K562 (cell line): ENCODE measurements at regions of chr12 and their contacts with region 1.

Region 1: DNA sequence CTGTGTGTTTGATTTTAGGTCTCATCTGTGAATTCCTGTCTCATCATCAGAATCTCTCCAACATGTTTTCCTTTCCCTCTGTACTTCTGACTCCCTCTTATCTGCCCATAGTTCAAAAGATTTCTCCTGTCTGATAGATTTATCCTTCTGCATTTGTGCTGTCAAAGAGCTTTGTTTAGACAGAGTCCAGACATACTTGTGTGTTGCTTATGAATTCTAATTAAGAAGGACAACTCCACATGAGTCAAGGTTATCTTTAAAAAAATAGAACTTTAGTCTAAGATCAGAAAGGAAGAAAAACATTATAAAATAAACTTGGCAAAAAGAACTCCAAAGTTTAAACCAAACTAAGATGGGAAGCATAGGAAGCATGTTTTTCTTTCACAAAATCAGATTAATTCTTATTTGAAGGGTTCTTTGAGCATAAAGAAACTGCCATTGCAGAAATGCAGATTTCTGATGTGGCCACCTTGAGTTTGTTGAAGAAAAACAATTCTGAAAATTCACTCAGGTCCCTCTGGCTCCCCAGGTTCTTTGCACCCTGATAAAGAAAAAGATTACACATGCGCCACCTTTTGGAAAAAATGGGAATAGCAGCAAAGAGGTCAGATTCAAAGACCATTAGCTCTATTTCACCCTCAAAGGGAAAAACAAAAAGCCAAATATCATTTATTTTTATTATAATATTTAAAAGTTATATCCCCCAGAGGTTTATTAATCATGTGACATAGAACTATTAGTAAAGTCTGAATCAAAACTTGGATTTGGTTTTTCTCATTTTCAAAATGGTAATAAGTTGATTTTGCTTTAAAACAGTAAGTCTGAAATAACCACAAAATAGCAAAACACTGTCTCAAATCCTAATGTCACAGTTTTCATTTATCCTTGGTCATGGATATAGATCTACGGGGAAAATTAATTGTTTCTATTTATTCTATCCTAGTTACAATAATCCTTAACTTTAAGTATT is 143.7 kb upstream of the DCN start:
- DNase-seq: peak; percentile 37 to 65 (median 43)
- ATAC-seq: peak; percentile 74
- H3K4me3 ChIP-seq: no peak overlapping the region
- H3K27ac ChIP-seq: no peak overlapping the region
- H3K4me1 ChIP-seq: no peaks in the 10 kb centered on the region
- H3K27me3 ChIP-seq: no peaks in the 10 kb centered on the region
- CTCF ChIP-seq: peak; percentile 50 to 79 (median 63); a peak in 5 of 6 replicates
- EP300 ChIP-seq: no peak
- POLR2A ChIP-seq: no peak
- RAD21 ChIP-seq: peak; percentile 42 to 50

Region 2: GRCh38 chr12:89800435-89800834 is 1525.9 kb before region 1 on chr12:
- CTCF ChIA-PET with region 1: no interaction called
- POLR2A ChIA-PET with region 1: no interaction called
- in situ Hi-C with region 1: no loop called
- intact Hi-C with region 1: no loop called
- DNase-seq: peak; percentile 59 to 80 (median 72)
- ATAC-seq: peak; percentile 93
- H3K4me3 ChIP-seq: no peak overlapping the region
- H3K27ac ChIP-seq: no peak overlapping the region
- H3K4me1 ChIP-seq: peaks cover 6 to 29% of the 10 kb centered on the region in 2 experiments; a peak in 3 of 5 replicates
- H3K27me3 ChIP-seq: no peaks in the 10 kb centered on the region
- CTCF ChIP-seq: no peak
- EP300 ChIP-seq: peak; percentile 51; the same call in 1 of the 2 replicates
- POLR2A ChIP-seq: no peak
- RAD21 ChIP-seq: no peak

Region 3: DNA sequence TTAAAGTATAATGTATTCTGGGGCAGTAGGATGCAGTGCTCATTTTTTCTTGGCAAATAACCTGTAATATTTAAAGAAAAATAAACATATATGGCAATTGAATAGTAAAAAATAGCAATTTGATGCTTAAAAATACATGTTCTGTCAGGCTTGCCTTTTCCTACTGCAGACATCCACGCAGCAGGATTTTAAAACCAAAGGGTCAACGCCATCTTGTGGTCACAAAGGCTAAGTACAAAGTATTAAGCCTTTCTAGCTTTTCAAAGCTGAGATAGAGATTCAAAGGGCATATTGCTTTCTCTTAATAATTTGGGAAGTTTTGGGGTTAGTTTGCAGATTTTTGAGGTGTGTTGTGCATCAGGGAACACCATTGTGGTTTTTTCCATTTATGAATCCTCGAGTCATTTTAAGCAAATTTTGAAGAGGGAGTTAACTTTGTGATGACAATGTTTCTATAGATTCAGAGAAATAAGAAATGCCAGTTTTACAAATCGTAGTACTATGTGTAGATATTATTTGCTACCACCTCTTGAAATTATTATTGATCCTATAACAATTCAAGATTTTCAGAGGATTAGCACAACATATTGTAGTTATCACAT is 366.7 kb before region 1 on chr12:
- CTCF ChIA-PET with region 1: no interaction called
- POLR2A ChIA-PET with region 1: no interaction called
- in situ Hi-C with region 1: no loop called
- intact Hi-C with region 1: loop called (anchors 5 kb)
- DNase-seq: peak; percentile 13 to 50 (median 28)
- ATAC-seq: peak; percentile 82
- H3K4me3 ChIP-seq: no peak overlapping the region
- H3K27ac ChIP-seq: no peak overlapping the region
- H3K4me1 ChIP-seq: peaks cover 0 to 3% of the 10 kb centered on the region in 2 experiments; a peak in 1 of 5 replicates
- H3K27me3 ChIP-seq: no peaks in the 10 kb centered on the region
- CTCF ChIP-seq: peak; percentile 62 to 67 (median 66)
- EP300 ChIP-seq: no peak
- POLR2A ChIP-seq: no peak
- RAD21 ChIP-seq: peak; percentile 43 to 66; a peak in 3 of 4 replicates

Region 4: GRCh38 chr12:90978117-90978770 is 348.1 kb before region 1 on chr12:
- CTCF ChIA-PET with region 1: no interaction called
- POLR2A ChIA-PET with region 1: no interaction called
- in situ Hi-C with region 1: loop called (anchors 25 kb)
- intact Hi-C with region 1: loop called (anchors 5 kb)
- DNase-seq: peak in 3 of 4 experiments; percentile 9 to 25 (median 14)
- ATAC-seq: peak; percentile 76
- H3K4me3 ChIP-seq: no peak overlapping the region
- H3K27ac ChIP-seq: no peak overlapping the region
- H3K4me1 ChIP-seq: no peaks in the 10 kb centered on the region
- H3K27me3 ChIP-seq: no peaks in the 10 kb centered on the region
- CTCF ChIP-seq: peak; percentile 40 to 60 (median 45); a peak in 4 of 6 replicates
- EP300 ChIP-seq: no peak
- POLR2A ChIP-seq: no peak
- RAD21 ChIP-seq: peak; percentile 45 to 67

Region 5: GRCh38 chr12:91109148-91109564 is 217.2 kb before region 1 on chr12:
- CTCF ChIA-PET with region 1: no interaction called
- POLR2A ChIA-PET with region 1: no interaction called
- in situ Hi-C with region 1: no loop called
- intact Hi-C with region 1: loop called (anchors 10 kb)
- DNase-seq: peak; percentile 7 to 59 (median 27)
- ATAC-seq: peak; percentile 85
- H3K4me3 ChIP-seq: no peak overlapping the region
- H3K27ac ChIP-seq: no peak overlapping the region
- H3K4me1 ChIP-seq: no peaks in the 10 kb centered on the region
- H3K27me3 ChIP-seq: no peaks in the 10 kb centered on the region
- CTCF ChIP-seq: peak; percentile 37 to 65 (median 51)
- EP300 ChIP-seq: no peak
- POLR2A ChIP-seq: no peak
- RAD21 ChIP-seq: peak; percentile 17 to 55; a peak in 2 of 4 replicates

Region 6: GRCh38 chr12:91178139-91178561 is 148.2 kb before region 1 on chr12:
- CTCF ChIA-PET with region 1: interaction called, 4 read pairs
- POLR2A ChIA-PET with region 1: no interaction called
- in situ Hi-C with region 1: no loop called
- intact Hi-C with region 1: loop called (anchors 2 kb)
- DNase-seq: peak in 1 of 4 experiments; percentile 1
- ATAC-seq: peak; percentile 69
- H3K4me3 ChIP-seq: no peak overlapping the region
- H3K27ac ChIP-seq: no peak overlapping the region
- H3K4me1 ChIP-seq: no peaks in the 10 kb centered on the region
- H3K27me3 ChIP-seq: no peaks in the 10 kb centered on the region
- CTCF ChIP-seq: peak; percentile 11 to 51 (median 30); a peak in 4 of 6 replicates
- EP300 ChIP-seq: no peak
- POLR2A ChIP-seq: no peak
- RAD21 ChIP-seq: peak; percentile 38 to 63; a peak in 3 of 4 replicates

Region 7: GRCh38 chr12:91561958-91562875 is 235.9 kb after region 1 on chr12:
- CTCF ChIA-PET with region 1: no interaction called
- POLR2A ChIA-PET with region 1: no interaction called
- in situ Hi-C with region 1: no loop called
- intact Hi-C with region 1: no loop called
- DNase-seq: no peak
- ATAC-seq: no peak
- H3K4me3 ChIP-seq: no peak overlapping the region
- H3K27ac ChIP-seq: no peak overlapping the region
- H3K4me1 ChIP-seq: peaks cover 7 to 9% of the 10 kb centered on the region in 2 experiments; a peak in 4 of 5 replicates
- H3K27me3 ChIP-seq: no peaks in the 10 kb centered on the region
- CTCF ChIP-seq: no peak
- EP300 ChIP-seq: no peak
- POLR2A ChIP-seq: no peak
- RAD21 ChIP-seq: no peak

Region 8: DNA sequence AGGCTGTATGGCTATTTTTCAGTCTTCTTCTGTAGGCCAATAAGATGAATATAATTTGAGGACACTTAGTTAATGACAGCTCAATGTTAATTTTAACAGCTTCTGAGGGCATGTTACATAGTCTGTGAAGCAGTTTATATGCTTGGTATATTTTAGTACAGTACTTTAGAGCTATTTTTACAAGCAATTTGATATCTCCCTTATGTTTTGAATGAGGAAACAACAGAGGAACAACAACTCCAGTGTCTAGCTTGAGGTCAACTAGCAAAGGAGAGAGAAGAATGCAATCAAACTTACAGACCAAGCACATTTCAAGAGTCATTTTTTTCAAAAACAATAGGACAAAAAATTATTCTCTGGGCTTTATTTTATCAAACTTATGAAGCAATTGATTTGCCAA is 325.4 kb after region 1 on chr12:
- CTCF ChIA-PET with region 1: no interaction called
- POLR2A ChIA-PET with region 1: no interaction called
- in situ Hi-C with region 1: no loop called
- intact Hi-C with region 1: no loop called
- DNase-seq: no peak
- ATAC-seq: no peak
- H3K4me3 ChIP-seq: no peak overlapping the region
- H3K27ac ChIP-seq: no peak overlapping the region
- H3K4me1 ChIP-seq: no peaks in the 10 kb centered on the region
- H3K27me3 ChIP-seq: no peaks in the 10 kb centered on the region
- CTCF ChIP-seq: no peak
- EP300 ChIP-seq: no peak
- POLR2A ChIP-seq: no peak
- RAD21 ChIP-seq: no peak

Region 9: DNA sequence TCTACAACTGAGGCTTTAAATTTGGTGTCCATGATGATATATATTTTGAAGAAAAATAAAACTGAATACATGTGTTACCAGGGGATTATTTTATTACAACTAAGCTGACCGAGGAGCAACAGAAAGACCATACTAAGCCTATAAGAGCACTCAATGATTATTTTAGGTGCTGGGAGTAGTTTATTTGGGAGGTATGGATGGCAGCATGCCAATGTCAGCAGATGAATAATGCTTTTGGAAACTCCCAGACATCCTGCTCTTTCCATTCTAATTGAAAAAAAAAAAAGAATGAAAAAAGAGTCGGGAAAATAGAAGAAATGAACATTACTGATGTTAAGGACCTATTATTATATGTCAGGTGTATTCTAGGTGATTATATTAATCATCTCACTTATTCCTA is 378.1 kb after region 1 on chr12:
- CTCF ChIA-PET with region 1: no interaction called
- POLR2A ChIA-PET with region 1: no interaction called
- in situ Hi-C with region 1: no loop called
- intact Hi-C with region 1: no loop called
- DNase-seq: no peak
- ATAC-seq: no peak
- H3K4me3 ChIP-seq: no peak overlapping the region
- H3K27ac ChIP-seq: no peak overlapping the region
- H3K4me1 ChIP-seq: no peaks in the 10 kb centered on the region
- H3K27me3 ChIP-seq: no peaks in the 10 kb centered on the region
- CTCF ChIP-seq: no peak
- EP300 ChIP-seq: no peak
- POLR2A ChIP-seq: no peak
- RAD21 ChIP-seq: no peak